Calu3 (cell line): ENCODE measurements at regions of chr7 and their contacts with region 1.

Region 1: DNA sequence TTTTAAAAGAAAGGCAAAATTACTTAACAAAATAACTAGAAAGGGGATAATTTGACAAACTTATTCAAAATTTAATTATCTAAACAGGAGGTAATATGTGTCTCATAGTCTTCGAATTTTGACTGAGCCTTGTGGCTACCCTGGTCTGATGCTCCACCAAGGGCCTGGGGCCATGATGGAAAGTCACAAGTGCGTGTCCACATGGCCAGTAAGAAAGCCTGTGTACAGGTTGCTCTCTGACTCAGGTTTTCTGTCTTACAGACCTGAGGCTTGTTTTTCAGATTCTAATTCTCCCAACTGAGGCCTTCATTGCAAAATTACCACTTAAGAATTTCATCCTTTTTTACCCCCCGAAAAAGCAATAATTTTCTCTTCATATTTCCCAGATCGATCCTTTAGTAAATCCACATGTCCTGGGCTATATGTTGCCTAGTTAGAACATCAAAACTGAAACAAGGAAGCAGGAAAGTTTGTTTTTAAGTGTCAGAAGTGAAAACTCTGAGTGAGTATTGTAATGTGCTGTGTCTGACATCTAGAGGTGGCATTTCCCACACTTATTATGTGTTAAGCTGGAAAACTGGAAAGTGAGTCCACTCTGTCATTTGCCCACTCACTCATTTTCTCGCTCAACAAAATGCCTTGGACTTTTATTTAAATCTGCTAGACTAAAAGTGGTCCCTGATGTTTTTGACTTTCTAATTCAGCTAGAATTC is 10.0 kb downstream of the CYP3A43 start:
- DNase-seq: no peak
- H3K4me3 Mint-ChIP-seq: peak overlapping the region; percentile 16
- H3K27ac Mint-ChIP-seq: peak overlapping the region; percentile 15
- H3K4me1 Mint-ChIP-seq: peaks cover 17% of the 10 kb centered on the region
- H3K27me3 Mint-ChIP-seq: no peaks in the 10 kb centered on the region
- CTCF ChIP-seq: no peak

Region 2: GRCh38 chr7:99314504-99314903 is 523.3 kb before region 1 on chr7:
- CTCF ChIA-PET with region 1: no interaction called
- intact Hi-C with region 1: no loop called
- DNase-seq: no peak
- H3K4me3 Mint-ChIP-seq: no peak overlapping the region
- H3K27ac Mint-ChIP-seq: no peak overlapping the region
- H3K4me1 Mint-ChIP-seq: no peaks in the 10 kb centered on the region
- H3K27me3 Mint-ChIP-seq: no peaks in the 10 kb centered on the region
- CTCF ChIP-seq: no peak

Region 3: GRCh38 chr7:99631295-99632109 is 206.3 kb before region 1 on chr7:
- CTCF ChIA-PET with region 1: interaction called, 10 read pairs
- intact Hi-C with region 1: loop called (anchors 1 kb)
- DNase-seq: peak; percentile 5
- H3K4me3 Mint-ChIP-seq: no peak overlapping the region
- H3K27ac Mint-ChIP-seq: no peak overlapping the region
- H3K4me1 Mint-ChIP-seq: no peaks in the 10 kb centered on the region
- H3K27me3 Mint-ChIP-seq: no peaks in the 10 kb centered on the region
- CTCF ChIP-seq: no peak

Region 4: GRCh38 chr7:99709838-99710578 is 127.8 kb before region 1 on chr7:
- CTCF ChIA-PET with region 1: no interaction called
- intact Hi-C with region 1: loop called (anchors 5 kb)
- DNase-seq: no peak
- H3K4me3 Mint-ChIP-seq: no peak overlapping the region
- H3K27ac Mint-ChIP-seq: no peak overlapping the region
- H3K4me1 Mint-ChIP-seq: peaks cover 18% of the 10 kb centered on the region
- H3K27me3 Mint-ChIP-seq: no peaks in the 10 kb centered on the region
- CTCF ChIP-seq: no peak

Region 5: DNA sequence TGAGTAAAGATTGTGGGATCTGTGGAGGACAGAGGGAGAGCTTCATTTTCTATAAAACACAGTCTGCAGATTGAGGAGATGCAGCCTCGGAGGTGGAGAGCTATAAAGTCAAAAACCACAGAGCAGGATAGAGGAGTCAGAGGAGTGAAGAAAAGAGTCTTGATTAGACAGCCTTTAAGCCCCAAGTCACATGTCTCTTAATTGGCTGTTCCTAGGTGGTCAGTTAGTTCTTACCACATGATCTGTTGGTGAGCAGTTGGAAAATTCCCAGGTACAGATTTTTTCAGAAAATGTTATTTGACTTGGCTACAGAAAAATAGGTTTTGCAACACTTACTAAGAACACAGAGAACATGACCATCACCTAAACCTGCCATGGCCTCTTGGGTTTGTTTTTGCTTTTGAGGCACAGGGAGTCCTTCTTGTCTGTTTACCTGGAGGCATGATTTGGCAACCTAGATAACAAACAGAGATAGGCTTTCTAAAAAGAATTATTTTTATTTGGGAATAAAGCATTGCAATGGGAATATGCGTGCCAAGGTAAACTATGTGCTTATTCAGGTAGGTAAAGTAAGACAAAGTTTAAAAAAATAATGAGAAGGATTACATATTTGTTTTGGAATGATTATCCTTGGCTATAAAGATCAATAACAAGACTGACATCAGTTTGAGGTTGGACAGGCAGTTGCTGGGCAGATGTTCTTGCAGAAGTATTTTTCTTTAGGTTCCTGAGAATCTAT is 10.6 kb before region 1 on chr7:
- CTCF ChIA-PET with region 1: no interaction called
- intact Hi-C with region 1: no loop called
- DNase-seq: no peak
- H3K4me3 Mint-ChIP-seq: no peak overlapping the region
- H3K27ac Mint-ChIP-seq: no peak overlapping the region
- H3K4me1 Mint-ChIP-seq: peaks cover 28% of the 10 kb centered on the region
- H3K27me3 Mint-ChIP-seq: no peaks in the 10 kb centered on the region
- CTCF ChIP-seq: no peak

Region 6: GRCh38 chr7:99876491-99876890 is 38.7 kb after region 1 on chr7:
- CTCF ChIA-PET with region 1: no interaction called
- intact Hi-C with region 1: no loop called
- DNase-seq: no peak
- H3K4me3 Mint-ChIP-seq: no peak overlapping the region
- H3K27ac Mint-ChIP-seq: no peak overlapping the region
- H3K4me1 Mint-ChIP-seq: no peaks in the 10 kb centered on the region
- H3K27me3 Mint-ChIP-seq: peaks cover 26% of the 10 kb centered on the region
- CTCF ChIP-seq: no peak

Region 7: GRCh38 chr7:100034871-100035510 is 197.2 kb after region 1 on chr7:
- CTCF ChIA-PET with region 1: no interaction called
- intact Hi-C with region 1: no loop called
- DNase-seq: no peak
- H3K4me3 Mint-ChIP-seq: no peak overlapping the region
- H3K27ac Mint-ChIP-seq: no peak overlapping the region
- H3K4me1 Mint-ChIP-seq: no peaks in the 10 kb centered on the region
- H3K27me3 Mint-ChIP-seq: no peaks in the 10 kb centered on the region
- CTCF ChIP-seq: no peak